GM10248 (cell line): ENCODE measurements at regions of chr4 and their contacts with region 1.

Region 1: GRCh38 chr4:38902695-38903094 is 35.1 kb downstream of the FAM114A1 start:
- DNase-seq: peak; percentile 56
- CTCF ChIP-seq: peak; percentile 40

Region 2: DNA sequence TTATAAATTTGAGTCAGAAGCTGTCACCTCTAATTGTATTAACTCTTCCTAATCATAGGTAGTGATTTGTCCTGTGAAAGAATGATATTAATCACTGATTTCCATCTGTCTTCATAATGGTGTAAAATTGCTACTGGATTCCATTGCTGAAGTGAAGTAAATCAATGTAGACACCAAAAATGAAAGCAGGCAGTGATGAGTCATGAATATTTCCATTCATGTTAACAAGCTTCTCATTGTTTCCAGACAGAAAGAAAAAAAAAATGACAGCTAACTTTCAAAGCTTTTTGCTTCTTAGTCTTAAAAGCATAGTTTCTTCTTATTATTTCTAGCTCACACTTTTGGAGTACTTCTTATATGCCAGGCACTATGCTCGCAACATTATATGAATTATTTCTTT is 13.6 kb before region 1 on chr4:
- CTCF ChIA-PET with region 1: interaction called, 24 read pairs
- POLR2A ChIA-PET with region 1: no interaction called
- DNase-seq: peak; percentile 69
- CTCF ChIP-seq: no peak

Region 3: DNA sequence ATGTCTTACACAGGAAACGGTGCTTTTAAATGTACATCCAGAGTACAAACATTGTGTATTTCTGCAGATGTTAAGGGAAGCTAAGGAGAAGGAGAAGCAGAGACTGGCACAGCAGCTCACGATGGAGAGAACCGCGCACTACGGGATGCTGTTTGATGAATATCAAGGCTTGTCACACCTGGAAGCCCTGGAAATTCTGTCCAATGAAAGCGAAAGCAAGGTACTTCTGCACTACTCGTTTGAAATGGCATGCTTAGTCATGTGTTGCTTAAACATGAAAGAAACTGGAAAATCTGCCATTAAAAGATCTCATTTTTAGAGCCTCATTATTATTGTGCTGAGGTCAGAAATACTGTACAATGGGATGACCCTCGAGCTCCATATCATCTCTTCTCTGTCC is 12.2 kb after region 1 on chr4:
- CTCF ChIA-PET with region 1: interaction called, 11 read pairs
- POLR2A ChIA-PET with region 1: no interaction called
- DNase-seq: peak; percentile 42
- CTCF ChIP-seq: no peak